ENCODE measurements at regions of chr3 and their contacts with region 1.

Region 1: DNA sequence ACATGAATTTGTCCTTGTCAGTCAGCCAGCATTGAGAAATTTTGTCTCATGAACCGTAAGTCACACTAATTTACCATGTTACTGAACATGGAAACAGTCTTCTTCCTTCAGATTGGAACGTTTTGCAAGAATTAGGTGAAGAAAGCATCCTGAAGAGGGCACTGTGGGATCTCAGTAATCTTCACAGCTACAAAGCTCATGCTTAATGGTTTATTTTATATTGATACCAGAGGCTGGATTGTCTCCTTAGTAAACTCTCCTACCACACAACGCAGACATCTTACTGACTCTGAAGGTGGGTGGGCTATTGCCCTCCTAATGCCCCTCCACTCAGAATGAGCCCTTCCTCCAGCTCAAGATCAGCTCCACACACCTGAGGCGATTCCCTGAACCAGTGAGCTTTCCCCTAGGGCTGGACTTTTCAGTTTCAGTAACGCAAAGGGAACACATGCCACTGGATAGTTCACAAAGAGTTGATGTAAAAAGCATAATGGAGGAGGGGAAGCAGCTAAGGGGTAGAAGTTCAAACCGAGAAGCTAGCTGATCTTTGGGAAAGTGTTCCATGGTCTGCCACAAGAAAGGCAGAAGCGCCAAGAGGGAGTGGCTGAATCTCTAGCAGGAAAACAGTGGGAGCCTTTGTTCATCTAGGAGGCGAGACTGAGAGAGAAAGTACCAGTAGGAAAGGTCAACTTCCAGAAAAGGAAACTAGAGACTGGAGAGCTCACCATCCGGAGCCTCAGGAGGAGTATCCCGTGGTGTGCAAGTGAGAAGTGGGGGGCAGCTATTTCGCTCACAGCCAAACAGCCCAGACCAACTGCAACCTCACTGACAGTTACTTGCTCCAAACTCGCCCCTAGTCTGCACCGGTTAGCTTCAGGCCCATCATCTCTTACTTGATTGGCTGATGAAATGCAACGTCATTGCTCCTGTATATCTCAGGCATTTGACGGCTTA is at the start of gene SLC9C1:
- DNase-seq: peak; percentile 68
- ATAC-seq: peak; percentile 74
- H3K4me3 Mint-ChIP-seq: peak within 1 kb of the TSS; percentile 30
- H3K27ac Mint-ChIP-seq: peak within 1 kb of the TSS; percentile 62
- H3K4me1 Mint-ChIP-seq: peaks cover 22% of the 10 kb centered on the region
- H3K27me3 Mint-ChIP-seq: peaks cover 2% of the 10 kb centered on the region
- total RNA-seq, gene SLC9C1: not detected

Region 2: GRCh38 chr3:112136959-112137693 is 156.5 kb before region 1 on chr3:
- CTCF ChIA-PET with region 1: interaction called, 35 read pairs
- POLR2A ChIA-PET with region 1: no interaction called
- DNase-seq: peak; percentile 67
- ATAC-seq: no peak
- H3K4me3 Mint-ChIP-seq: no peak overlapping the region
- H3K27ac Mint-ChIP-seq: no peak overlapping the region
- H3K4me1 Mint-ChIP-seq: peaks cover 36% of the 10 kb centered on the region
- H3K27me3 Mint-ChIP-seq: no peaks in the 10 kb centered on the region

Region 3: GRCh38 chr3:112321867-112322649 is 28.4 kb after region 1 on chr3:
- CTCF ChIA-PET with region 1: interaction called, 40 read pairs
- POLR2A ChIA-PET with region 1: no interaction called
- DNase-seq: no peak
- ATAC-seq: no peak
- H3K4me3 Mint-ChIP-seq: no peak overlapping the region
- H3K27ac Mint-ChIP-seq: no peak overlapping the region
- H3K4me1 Mint-ChIP-seq: no peaks in the 10 kb centered on the region
- H3K27me3 Mint-ChIP-seq: peaks cover 10% of the 10 kb centered on the region

Region 4: GRCh38 chr3:112333002-112333380 is 39.3 kb after region 1 on chr3 and contains the start of gene CD200:
- CTCF ChIA-PET with region 1: interaction called, 15 read pairs
- POLR2A ChIA-PET with region 1: interaction called, 4 read pairs
- DNase-seq: peak; percentile 49
- ATAC-seq: peak; percentile 87
- H3K4me3 Mint-ChIP-seq: peak within 1 kb of the TSS; percentile 84
- H3K27ac Mint-ChIP-seq: peak within 1 kb of the TSS; percentile 78
- H3K4me1 Mint-ChIP-seq: peaks cover 32% of the 10 kb centered on the region
- H3K27me3 Mint-ChIP-seq: no peaks in the 10 kb centered on the region
- total RNA-seq, gene CD200: 0.86 to 1.4 TPM

Region 5: GRCh38 chr3:112519424-112520001 is 225.9 kb after region 1 on chr3:
- CTCF ChIA-PET with region 1: interaction called, 30 read pairs
- POLR2A ChIA-PET with region 1: no interaction called
- DNase-seq: peak; percentile 68
- ATAC-seq: peak; percentile 80
- H3K4me3 Mint-ChIP-seq: no peak overlapping the region
- H3K27ac Mint-ChIP-seq: no peak overlapping the region
- H3K4me1 Mint-ChIP-seq: peaks cover 18% of the 10 kb centered on the region
- H3K27me3 Mint-ChIP-seq: no peaks in the 10 kb centered on the region